ENCODE measurements at regions of chr5 and their contacts with region 1.

Region 1: DNA sequence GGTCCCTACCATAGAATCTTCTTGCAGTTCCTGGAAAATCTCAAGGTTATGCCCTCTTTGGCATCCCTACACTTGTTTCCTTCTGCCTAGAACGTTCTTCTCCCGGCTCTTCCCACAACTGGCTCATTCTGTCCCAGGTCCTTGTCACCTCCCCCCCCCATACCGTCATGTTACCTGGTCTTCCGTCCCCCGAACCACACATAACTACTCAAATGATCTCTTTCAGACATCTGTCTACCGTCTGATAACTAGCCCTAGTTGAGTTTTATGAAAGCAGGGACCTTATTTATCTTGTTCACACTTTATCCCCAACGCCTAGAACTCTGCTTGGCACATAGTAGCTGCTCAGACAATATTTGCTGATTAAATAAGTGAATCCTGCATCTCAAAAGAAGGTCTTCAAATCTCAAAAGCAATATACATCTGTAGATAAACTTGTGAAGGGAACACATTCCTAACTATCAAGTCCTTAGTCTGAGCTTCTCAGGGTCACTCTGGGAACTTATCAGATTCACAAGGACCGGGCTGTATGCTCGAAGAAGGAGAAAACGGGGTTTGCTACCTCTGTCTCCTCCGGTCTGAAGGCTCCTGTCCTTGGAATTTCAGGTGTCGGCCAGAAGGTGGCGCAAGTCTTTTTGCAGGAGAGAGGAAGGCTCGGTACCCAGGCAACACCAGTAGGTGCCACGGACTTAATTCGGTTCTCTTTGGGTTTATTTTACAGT is 30.0 kb downstream of the LCP2 start:
- DNase-seq: no peak

Region 2: GRCh38 chr5:170338933-170339779 is 71.6 kb after region 1 on chr5:
- intact Hi-C with region 1: loop called (anchors 5 kb)
- DNase-seq: peak; percentile 82

Region 3: GRCh38 chr5:170420780-170421412 is 153.3 kb after region 1 on chr5:
- intact Hi-C with region 1: loop called (anchors 2 kb)
- DNase-seq: no peak

Region 4: GRCh38 chr5:170571875-170572852 is 304.6 kb after region 1 on chr5:
- intact Hi-C with region 1: no loop called
- DNase-seq: no peak

Region 5: DNA sequence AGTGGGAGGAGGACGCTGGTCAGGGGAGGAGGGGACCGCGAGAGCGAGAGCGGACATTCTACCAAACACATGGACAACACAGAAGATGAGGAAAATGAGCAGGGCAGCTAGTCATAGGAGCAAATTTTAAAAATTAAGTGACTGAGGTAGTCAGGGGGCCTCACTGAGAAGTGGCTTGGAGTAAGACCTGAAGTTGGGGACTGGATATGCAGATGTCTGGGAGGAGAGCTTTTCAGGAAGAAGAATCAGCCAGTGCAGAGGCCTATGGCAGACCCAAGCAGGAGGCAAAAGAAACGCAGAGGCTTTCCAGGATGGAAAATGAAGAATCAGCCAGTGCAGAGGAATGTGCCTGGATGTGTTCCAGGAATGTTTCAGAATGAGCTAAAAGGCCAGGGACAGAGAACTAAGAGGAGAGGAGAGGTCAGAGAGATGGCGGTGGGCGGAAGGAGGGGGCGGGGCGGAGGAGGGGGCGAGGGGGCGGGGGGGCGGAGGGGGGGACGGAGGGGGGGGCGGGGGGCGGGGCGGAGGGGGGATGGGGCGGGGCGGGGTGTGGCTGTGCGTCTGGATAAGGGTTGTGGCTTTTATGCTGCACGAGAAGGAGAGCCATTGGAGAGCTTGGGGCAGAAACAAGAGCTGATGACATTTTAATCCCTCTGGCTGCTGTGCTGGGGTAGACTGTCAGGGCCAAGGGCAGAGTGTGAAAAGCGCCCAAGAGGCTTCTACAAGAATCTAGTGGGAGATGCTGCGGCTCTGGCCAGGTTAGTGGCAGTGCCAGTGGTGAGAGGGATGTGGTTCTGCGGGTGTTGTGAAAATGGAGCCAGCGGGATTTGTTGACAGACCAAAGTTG is 365.9 kb after region 1 on chr5:
- intact Hi-C with region 1: loop called (anchors 5 kb)
- DNase-seq: no peak

Measured in cardiac septum (tissue), 1 donor.